ENCODE measurements at regions of chr11 and their contacts with region 1.

Region 1: GRCh38 chr11:20535271-20535881 is 64.0 kb upstream of the SLC6A5 start:
- DNase-seq: no peak
- ATAC-seq: no peak
- H3K4me3 ChIP-seq: no peak overlapping the region
- H3K27ac ChIP-seq: no peak overlapping the region
- H3K4me1 ChIP-seq: no peaks in the 10 kb centered on the region
- H3K27me3 ChIP-seq: peaks cover 0 to 4% (median 0%) of the 10 kb centered on the region in 9 donors
- CTCF ChIP-seq: no peak
- POLR2A ChIP-seq: no peak

Region 2: DNA sequence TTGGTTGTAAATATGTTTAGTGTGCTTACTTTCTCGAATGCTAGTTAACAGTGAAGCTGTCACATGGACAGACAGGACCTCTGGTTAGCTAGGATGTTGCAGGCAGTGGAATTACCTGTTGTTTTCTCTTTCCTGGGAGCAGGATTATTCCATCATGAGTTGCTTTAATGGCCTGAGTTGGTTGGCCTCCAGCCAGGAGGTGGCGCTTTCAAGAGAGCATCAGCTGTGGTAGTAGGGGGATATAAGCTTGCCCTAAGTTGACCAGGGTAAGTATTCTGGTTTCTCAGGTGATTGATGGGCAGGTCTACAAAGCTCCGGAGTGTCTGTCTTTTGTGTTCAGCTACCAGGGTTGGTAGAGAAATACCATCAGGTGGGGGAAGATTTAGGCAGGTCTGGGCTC is 177.5 kb after region 1 on chr11:
- intact Hi-C with region 1: loop called in 1 of 10 experiments (anchors 2 kb)
- DNase-seq: no peak
- ATAC-seq: no peak
- H3K4me3 ChIP-seq: no peak overlapping the region
- H3K27ac ChIP-seq: no peak overlapping the region
- H3K4me1 ChIP-seq: no peaks in the 10 kb centered on the region
- H3K27me3 ChIP-seq: no peaks in the 10 kb centered on the region
- CTCF ChIP-seq: no peak
- POLR2A ChIP-seq: no peak

Region 3: GRCh38 chr11:20993073-20993472 is 457.7 kb after region 1 on chr11:
- intact Hi-C with region 1: no loop called
- DNase-seq: no peak
- ATAC-seq: no peak
- H3K4me3 ChIP-seq: no peak overlapping the region
- H3K27ac ChIP-seq: no peak overlapping the region
- H3K4me1 ChIP-seq: no peaks in the 10 kb centered on the region
- H3K27me3 ChIP-seq: no peaks in the 10 kb centered on the region
- CTCF ChIP-seq: no peak
- POLR2A ChIP-seq: no peak

Measured in heart left ventricle (tissue), 16 donors.